ENCODE measurements at regions of chr6 and their contacts with region 1.

Region 1: DNA sequence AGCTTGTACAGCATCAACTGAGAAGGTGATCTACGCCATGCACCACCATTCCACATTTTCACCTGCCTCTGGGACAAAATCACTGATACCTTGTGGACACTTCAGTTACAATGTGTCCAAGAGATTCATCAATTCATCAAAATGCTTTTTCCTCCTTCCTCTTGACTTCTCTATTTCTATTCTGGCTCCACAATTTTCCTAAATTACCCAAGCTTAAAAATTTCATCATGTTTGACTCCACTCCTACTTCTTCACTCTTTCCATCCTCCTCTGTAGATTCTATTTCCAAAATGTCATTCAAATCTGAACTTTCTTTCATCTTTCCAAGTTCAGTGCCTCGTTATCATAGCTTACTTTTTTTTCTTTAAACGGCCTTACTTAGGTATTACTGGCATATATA is 172.2 kb downstream of the BTBD9 start:
- DNase-seq: no peak
- ATAC-seq: no peak
- H3K4me3 ChIP-seq: no peak overlapping the region
- H3K27ac ChIP-seq: no peak overlapping the region
- H3K4me1 ChIP-seq: no peaks in the 10 kb centered on the region
- H3K27me3 ChIP-seq: no peaks in the 10 kb centered on the region
- CTCF ChIP-seq: no peak

Region 2: DNA sequence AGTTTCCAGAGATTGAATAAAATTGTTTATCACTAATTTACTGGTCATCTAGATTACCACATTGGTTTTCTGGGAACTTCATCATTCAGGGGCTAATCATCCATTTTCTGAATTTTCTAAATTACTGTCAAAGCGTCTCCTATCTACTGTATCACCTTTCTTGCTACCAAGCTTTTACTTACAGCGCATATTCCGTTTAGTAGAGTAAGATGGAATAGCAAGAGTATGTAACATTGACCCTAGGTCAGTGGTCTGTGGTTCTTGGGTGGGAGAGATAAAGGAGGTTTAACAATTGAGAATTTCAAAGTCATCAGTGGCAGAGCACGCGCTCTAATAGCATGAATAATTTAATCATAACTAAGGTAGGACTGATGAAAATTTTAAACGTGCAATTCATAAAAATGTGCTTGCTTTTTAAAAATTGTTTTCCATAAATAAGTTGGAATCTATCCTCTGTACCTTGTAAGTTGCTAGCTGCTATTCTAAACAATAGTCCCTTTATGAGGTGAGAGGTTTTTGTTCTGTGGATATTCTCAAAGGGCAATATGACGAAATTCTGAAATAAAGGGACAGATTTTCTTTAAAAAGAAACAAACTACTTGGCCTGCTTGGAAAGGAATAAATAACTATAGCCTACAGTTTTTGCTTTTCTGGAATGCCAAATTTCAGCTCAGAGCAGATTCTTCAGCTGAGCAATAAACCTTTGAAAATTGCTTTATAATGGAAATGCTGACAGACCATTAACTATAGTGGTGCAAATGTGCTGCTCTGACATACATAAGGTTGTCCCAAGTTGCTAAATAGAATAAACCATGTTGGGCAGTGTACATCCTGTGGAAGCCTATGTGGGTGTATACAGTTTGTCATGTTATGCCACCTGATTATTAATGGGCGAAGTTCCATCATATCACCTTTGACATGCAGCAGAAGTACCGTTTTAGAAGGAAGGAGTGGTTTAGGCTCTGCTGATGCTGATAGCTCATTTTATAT is 563.9 kb before region 1 on chr6:
- CTCF ChIA-PET with region 1: no interaction called
- POLR2A ChIA-PET with region 1: interaction called, 10 read pairs
- in situ Hi-C with region 1: no loop called
- intact Hi-C with region 1: no loop called
- DNase-seq: no peak
- ATAC-seq: no peak
- H3K4me3 ChIP-seq: no peak overlapping the region
- H3K27ac ChIP-seq: no peak overlapping the region
- H3K4me1 ChIP-seq: peaks cover 15% of the 10 kb centered on the region; the same call in 1 of the 2 replicates
- H3K27me3 ChIP-seq: no peaks in the 10 kb centered on the region
- CTCF ChIP-seq: no peak

Region 3: DNA sequence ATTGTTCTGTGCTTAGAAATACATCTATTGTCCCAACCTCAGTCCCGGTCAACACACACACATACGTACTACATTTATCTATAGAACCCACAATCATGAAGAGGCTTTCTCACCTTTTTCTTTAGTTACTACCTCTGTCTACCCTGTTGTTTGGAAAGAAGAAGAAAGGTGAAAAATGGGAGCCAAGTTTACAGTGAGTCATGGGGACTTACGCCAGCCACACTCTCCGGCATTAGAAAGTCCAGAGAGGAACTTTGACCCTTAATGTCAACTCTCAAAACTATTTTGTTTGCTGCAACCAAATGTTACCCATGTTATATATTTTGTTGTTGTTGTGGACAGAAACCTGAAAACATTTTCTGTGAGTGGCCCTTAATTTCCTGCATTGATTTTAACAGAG is 388.9 kb before region 1 on chr6:
- CTCF ChIA-PET with region 1: no interaction called
- POLR2A ChIA-PET with region 1: interaction called, 11 read pairs
- in situ Hi-C with region 1: no loop called
- intact Hi-C with region 1: no loop called
- DNase-seq: no peak
- ATAC-seq: no peak
- H3K4me3 ChIP-seq: no peak overlapping the region
- H3K27ac ChIP-seq: no peak overlapping the region
- H3K4me1 ChIP-seq: no peaks in the 10 kb centered on the region
- H3K27me3 ChIP-seq: no peaks in the 10 kb centered on the region
- CTCF ChIP-seq: no peak

Region 4: GRCh38 chr6:38452816-38453660 is 14.5 kb before region 1 on chr6:
- CTCF ChIA-PET with region 1: no interaction called
- POLR2A ChIA-PET with region 1: no interaction called
- in situ Hi-C with region 1: no loop called
- intact Hi-C with region 1: no loop called
- DNase-seq: no peak
- ATAC-seq: no peak
- H3K4me3 ChIP-seq: no peak overlapping the region
- H3K27ac ChIP-seq: no peak overlapping the region
- H3K4me1 ChIP-seq: 0 out of 2 replicates have a peak, but pooled peaks cover 2% of the 10 kb centered on the region
- H3K27me3 ChIP-seq: no peaks in the 10 kb centered on the region
- CTCF ChIP-seq: no peak

Measured in Panc1 (cell line).